HAP-1 (cell line): ENCODE measurements at regions of chr13 and their contacts with region 1.

Region 1: GRCh38 chr13:100235311-100235901 is 146.5 kb downstream of the PCCA start:
- DNase-seq: peak; percentile 38 to 40
- H3K4me3 ChIP-seq: no peak overlapping the region
- H3K4me1 ChIP-seq: peaks cover 5% of the 10 kb centered on the region; the same call in 1 of the 2 replicates
- H3K27me3 ChIP-seq: no peaks in the 10 kb centered on the region

Region 2: DNA sequence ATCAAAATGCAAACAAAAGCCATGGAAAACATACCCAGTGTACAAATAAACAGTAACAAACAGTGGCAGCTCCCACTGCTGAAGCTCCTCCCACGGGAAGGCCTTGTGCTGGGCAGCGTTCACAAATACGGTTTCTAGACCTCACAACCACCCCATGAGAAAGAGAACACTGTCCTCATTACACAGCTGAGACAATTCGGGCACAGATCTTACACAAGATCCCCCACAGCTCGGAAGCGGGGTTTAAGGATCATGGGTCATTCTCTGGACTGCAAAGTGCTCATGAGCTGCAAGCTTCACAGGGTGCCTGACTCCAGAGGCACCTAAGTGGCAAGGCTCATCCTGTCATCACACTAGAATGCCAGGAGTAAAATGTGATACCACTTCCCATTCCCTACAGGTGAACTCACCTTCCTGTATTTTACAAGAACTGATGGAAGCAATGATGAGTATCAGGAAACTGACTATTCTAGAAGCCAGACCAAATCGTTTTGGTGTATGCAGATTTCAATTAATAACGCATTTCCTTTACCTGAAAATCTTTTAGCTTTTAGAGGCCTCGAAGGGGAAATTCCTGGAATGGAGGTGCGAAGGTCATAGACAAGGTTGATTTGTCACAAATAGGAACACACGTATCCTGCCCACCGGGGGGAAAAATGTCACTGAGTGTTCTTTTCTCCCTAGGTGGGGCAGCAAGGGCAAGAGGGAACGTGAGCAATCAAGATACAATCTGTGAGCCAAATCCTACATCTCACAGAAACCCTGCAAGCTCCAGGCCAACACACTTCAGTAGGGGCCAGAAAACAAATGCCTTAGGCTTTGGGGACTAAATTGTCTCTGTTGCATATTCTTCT is 1699.7 kb before region 1 on chr13:
- in situ Hi-C with region 1: no loop called
- DNase-seq: no peak
- H3K4me3 ChIP-seq: no peak overlapping the region
- H3K4me1 ChIP-seq: no peaks in the 10 kb centered on the region
- H3K27me3 ChIP-seq: no peaks in the 10 kb centered on the region

Region 3: DNA sequence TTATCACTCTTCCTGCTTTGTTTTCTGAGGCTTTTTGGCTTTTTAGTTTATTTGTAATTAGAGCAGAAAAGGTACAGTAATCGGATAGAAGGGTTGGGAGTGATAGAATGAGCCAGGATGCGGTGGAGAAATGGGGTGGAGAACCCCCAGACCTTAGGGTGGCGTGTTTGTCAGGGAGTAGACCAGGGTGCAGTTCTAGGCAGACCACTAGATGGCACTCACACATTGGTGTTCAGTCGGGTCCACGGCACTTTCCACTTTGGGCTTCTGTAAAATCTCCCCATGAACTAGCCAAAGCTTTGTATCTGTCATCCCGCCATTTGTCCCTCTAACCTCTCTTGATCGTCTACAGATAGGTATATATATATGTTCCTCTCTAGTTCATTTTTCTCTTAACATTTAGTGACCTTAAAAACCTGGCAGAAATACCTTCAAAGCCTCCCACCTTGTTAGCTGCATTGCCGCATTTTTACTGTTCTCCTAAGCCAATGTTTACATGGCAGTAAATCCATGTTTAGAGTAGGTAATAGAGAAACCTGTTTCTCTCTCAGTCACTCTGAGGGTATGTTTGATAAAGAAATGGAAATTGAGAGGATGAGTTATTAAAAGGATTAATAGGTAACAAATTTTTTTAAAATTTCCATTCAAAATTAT is 579.2 kb before region 1 on chr13:
- in situ Hi-C with region 1: loop called (anchors 10 kb)
- DNase-seq: peak; percentile 80 to 85
- H3K4me3 ChIP-seq: no peak overlapping the region
- H3K4me1 ChIP-seq: peaks cover 11% of the 10 kb centered on the region
- H3K27me3 ChIP-seq: peaks cover 13% of the 10 kb centered on the region

Region 4: GRCh38 chr13:99916366-99917103 is 318.9 kb before region 1 on chr13:
- in situ Hi-C with region 1: loop called (anchors 10 kb)
- DNase-seq: peak; percentile 43 to 70
- H3K4me3 ChIP-seq: no peak overlapping the region
- H3K4me1 ChIP-seq: no peaks in the 10 kb centered on the region
- H3K27me3 ChIP-seq: peaks cover 32% of the 10 kb centered on the region

Region 5: GRCh38 chr13:99980201-99980823 is 255.1 kb before region 1 on chr13:
- in situ Hi-C with region 1: loop called (anchors 10 kb)
- DNase-seq: peak; percentile 82 to 89
- H3K4me3 ChIP-seq: peak overlapping the region; percentile 47
- H3K4me1 ChIP-seq: peaks cover 6% of the 10 kb centered on the region
- H3K27me3 ChIP-seq: peaks cover 19% of the 10 kb centered on the region

Region 6: DNA sequence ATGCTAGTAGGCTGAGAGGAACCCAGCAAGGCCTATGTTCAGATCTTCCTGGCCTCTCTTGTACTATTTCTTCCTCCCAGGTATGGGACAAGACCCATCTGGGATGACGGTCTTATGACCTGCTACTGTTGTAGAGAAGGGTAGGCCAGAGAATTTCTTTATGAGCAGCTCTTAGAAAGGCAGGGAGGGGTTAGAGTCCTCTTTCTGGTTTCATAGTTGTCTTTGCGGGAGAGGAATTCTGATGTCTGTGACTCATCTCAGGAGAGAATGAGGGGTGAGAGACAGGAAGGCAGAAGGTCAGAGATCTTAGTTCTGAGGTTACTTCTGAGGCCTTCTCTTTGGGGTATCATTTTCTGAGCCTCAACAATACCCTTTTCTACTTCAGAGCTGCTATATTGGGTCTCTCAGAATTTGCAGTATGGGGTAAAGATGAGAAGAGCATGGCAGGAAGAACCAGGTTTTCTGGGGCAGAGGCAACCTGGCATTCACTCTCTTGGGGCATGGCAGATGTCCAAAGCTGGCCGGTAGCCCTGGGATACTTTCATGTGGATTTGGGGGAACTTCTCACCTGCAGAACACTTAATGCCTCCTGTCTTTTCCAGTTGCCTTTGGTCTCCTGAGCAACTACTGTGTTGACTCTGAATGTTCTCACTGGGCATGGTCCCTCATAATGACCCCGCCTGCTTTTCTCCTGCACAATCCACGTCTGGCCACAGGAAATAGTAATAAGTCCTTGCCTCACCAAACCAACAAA is 198.8 kb after region 1 on chr13:
- in situ Hi-C with region 1: no loop called
- DNase-seq: no peak
- H3K4me3 ChIP-seq: no peak overlapping the region
- H3K4me1 ChIP-seq: no peaks in the 10 kb centered on the region
- H3K27me3 ChIP-seq: no peaks in the 10 kb centered on the region

Region 7: GRCh38 chr13:100680131-100680530 is 444.7 kb after region 1 on chr13:
- in situ Hi-C with region 1: no loop called
- DNase-seq: no peak
- H3K4me3 ChIP-seq: no peak overlapping the region
- H3K4me1 ChIP-seq: peaks cover 3% of the 10 kb centered on the region; the same call in 1 of the 2 replicates
- H3K27me3 ChIP-seq: no peaks in the 10 kb centered on the region